Left lung (tissue), 14 donors: ENCODE measurements at regions of chr4 and their contacts with region 1.

Region 1: GRCh38 chr4:72468904-72469502 is 100.0 kb downstream of the ADAMTS3 start:
- DNase-seq: peak in 1 of 4 donors; percentile 5
- ATAC-seq: no peak
- H3K4me3 ChIP-seq: no peak overlapping the region
- H3K27ac ChIP-seq: no peak overlapping the region
- H3K4me1 ChIP-seq: no peaks in the 10 kb centered on the region
- H3K27me3 ChIP-seq: no peaks in the 10 kb centered on the region
- CTCF ChIP-seq: peak; percentile 3 to 49

Region 2: GRCh38 chr4:72326692-72327632 is 142.0 kb before region 1 on chr4:
- intact Hi-C with region 1: loop called in 1 of 2 experiments (anchors 10 kb)
- DNase-seq: peak in 1 of 4 donors; percentile 15
- ATAC-seq: peak; percentile 60
- H3K4me3 ChIP-seq: no peak overlapping the region
- H3K27ac ChIP-seq: no peak overlapping the region
- H3K4me1 ChIP-seq: no peaks in the 10 kb centered on the region
- H3K27me3 ChIP-seq: no peaks in the 10 kb centered on the region
- CTCF ChIP-seq: peak in 1 of 2 donors; percentile 61

Region 3: DNA sequence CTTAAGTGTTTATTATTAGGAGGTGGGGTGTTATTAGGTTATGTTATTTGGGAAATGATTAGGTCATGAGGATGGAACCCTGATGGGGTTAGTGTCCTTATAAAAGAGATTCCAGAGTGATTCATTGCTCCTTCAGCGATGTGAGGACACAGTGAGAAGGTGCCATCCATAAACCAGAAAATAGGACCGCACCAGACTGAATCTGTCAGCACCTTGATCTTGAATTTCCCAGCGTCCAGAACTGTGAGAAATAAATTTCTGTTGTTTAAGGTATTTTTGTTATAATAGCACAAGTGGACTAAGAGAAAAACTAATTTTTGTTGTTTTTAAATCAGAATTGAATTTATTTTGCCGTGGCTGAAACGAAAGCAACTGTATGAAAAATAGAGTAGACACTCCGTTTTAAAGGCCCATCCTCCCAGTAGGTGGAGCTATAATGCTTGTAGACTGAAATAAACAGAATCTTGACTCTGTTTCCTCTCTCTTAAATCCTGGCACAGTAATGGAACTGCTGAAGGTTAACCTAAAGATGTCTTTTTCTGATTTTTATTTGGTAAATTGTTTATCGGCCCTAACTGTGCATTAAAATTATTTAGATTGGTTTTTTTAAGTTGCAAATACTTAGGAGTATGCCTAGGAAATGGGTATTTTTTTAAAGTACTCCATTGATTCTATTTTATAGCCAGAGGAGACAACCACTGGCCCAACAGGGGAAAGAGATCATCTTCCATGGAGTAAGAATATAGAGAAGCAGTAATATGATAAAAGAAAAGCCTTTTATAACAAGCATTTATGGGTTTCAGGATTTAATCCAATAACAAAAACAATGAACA is 233.2 kb after region 1 on chr4:
- intact Hi-C with region 1: no loop called
- DNase-seq: peak in 2 of 4 donors; percentile 22 to 44
- ATAC-seq: peak; percentile 97
- H3K4me3 ChIP-seq: peak overlapping the region; percentile 16 to 18
- H3K27ac ChIP-seq: no peak overlapping the region
- H3K4me1 ChIP-seq: no peaks in the 10 kb centered on the region
- H3K27me3 ChIP-seq: no peaks in the 10 kb centered on the region
- CTCF ChIP-seq: peak; percentile 31 to 40